ENCODE measurements at regions of chr11 and their contacts with region 1.

Region 1: GRCh38 chr11:68213555-68214174 is 569 bp upstream of the KMT5B start:
- DNase-seq: peak; percentile 67 to 96 (median 79)
- ATAC-seq: peak; percentile 33
- H3K4me3 ChIP-seq: peak overlapping the region; percentile 79 to 89
- H3K4me3 Mint-ChIP-seq: peak overlapping the region; percentile 81
- H3K27ac ChIP-seq: peak overlapping the region; percentile 55 to 58
- H3K27ac Mint-ChIP-seq: peak overlapping the region; percentile 90
- H3K4me1 ChIP-seq: peaks cover 41% of the 10 kb centered on the region
- H3K4me1 Mint-ChIP-seq: peaks cover 46% of the 10 kb centered on the region
- H3K27me3 ChIP-seq: no peaks in the 10 kb centered on the region
- H3K27me3 Mint-ChIP-seq: peaks cover 2% of the 10 kb centered on the region
- CTCF ChIP-seq: no peak

Region 2: DNA sequence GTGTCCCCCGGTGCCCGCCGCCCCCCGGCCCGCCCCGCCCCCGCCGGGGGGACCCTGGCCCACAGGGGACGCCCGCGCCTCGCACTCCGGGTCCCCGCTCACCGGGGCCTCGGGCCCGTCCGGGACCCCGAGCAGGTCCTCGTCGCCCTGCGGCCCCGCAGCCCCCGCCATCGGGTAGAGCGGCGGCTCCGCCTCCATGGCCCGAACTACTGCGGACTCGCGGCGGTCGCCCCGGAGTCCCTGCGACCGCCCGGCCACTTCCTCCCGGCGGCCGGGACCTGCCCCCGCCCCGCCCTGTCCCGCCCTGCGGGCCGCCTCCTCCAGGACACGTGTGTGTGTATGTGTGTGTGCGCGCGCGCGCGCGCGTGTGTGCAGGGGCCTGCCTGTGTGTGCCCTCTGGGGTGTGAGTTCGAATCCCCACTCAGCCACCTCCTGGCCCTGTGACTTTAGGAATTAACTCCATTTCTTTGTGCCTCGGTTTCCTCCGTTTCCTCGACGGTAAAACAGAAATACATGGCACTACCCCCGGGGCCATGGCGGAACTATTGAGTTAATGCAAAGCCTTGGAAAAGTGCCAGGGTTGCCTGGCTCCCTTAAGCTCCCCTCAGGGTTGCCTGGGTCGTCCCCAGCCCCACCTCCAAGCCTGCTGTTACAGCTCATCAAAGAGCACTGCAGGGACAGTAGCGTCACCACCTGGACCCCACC is 209.7 kb before region 1 on chr11 and contains the start of gene UNC93B1:
- CTCF ChIA-PET with region 1: interaction called, 3 read pairs
- POLR2A ChIA-PET with region 1: no interaction called
- intact Hi-C with region 1: loop called in 1 of 2 experiments (anchors 2 kb)
- DNase-seq: peak; percentile 54 to 88 (median 77)
- ATAC-seq: peak; percentile 79
- H3K4me3 ChIP-seq: peak within 1 kb of the TSS; percentile 54 to 59
- H3K4me3 Mint-ChIP-seq: peak within 1 kb of the TSS; percentile 85
- H3K27ac ChIP-seq: peak within 1 kb of the TSS in 1 of 2 experiments; percentile 36
- H3K27ac Mint-ChIP-seq: peak within 1 kb of the TSS; percentile 72
- H3K4me1 ChIP-seq: peaks cover 7% of the 10 kb centered on the region
- H3K4me1 Mint-ChIP-seq: peaks cover 19% of the 10 kb centered on the region
- H3K27me3 ChIP-seq: no peaks in the 10 kb centered on the region
- H3K27me3 Mint-ChIP-seq: no peaks in the 10 kb centered on the region
- CTCF ChIP-seq: no peak
- total RNA-seq, gene UNC93B1: 14.4 to 15.6 TPM

Region 3: GRCh38 chr11:68121067-68121899 is 92.4 kb before region 1 on chr11 and contains the start of gene CHKA:
- CTCF ChIA-PET with region 1: no interaction called
- POLR2A ChIA-PET with region 1: no interaction called
- intact Hi-C with region 1: loop called (anchors 2 kb)
- DNase-seq: peak; percentile 61 to 92 (median 80)
- ATAC-seq: peak; percentile 82
- H3K4me3 ChIP-seq: peak within 1 kb of the TSS; percentile 57 to 64
- H3K4me3 Mint-ChIP-seq: peak within 1 kb of the TSS; percentile 81
- H3K27ac ChIP-seq: peak within 1 kb of the TSS; percentile 56 to 64
- H3K27ac Mint-ChIP-seq: peak within 1 kb of the TSS; percentile 83
- H3K4me1 ChIP-seq: peaks cover 15% of the 10 kb centered on the region
- H3K4me1 Mint-ChIP-seq: peaks cover 12% of the 10 kb centered on the region
- H3K27me3 ChIP-seq: no peaks in the 10 kb centered on the region
- H3K27me3 Mint-ChIP-seq: no peaks in the 10 kb centered on the region
- CTCF ChIP-seq: no peak
- total RNA-seq, gene CHKA: 50.2 to 54.6 TPM

Region 4: DNA sequence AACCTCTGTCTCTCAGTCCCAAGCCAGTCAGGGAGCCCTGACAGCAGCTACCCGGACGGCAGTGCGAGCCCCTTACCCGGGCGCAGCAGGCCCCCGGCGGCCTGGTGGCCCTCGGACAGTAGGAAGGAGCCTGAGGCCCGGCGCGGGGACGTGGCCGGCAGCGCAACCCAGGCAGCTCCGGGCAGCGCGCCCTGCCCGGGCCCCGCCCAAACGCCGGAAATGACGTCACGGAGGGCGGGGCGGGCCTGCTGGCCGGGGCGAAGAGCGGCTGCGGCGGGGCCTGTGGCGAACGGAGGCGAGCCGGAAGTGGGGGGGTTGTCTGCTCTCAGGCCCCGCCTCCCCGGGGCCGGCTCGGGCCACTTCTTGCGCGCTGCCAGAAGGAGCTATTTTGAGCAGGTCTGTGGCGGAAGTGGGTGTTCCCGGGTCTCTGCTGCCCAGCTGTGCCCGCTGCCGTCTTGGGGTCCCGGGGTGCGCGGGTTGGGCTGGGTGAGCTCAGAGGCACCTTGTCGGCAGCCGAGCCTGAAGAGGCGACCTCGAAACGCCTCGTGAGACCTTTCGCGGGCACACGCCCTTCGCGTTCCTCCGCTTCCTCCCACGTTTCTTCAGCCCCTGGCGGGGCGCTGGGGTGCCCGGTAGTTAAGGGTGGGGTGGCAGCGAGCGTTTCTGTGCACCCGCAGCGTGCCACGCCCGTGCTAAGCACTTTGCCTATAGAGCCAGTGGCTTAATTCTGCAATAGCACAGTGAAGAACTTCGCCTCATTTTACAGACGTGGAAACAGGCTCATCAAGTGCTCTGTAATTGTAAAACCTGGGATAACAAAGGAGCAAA is 58.3 kb after region 1 on chr11 and contains the start of gene C11orf24:
- CTCF ChIA-PET with region 1: no interaction called
- POLR2A ChIA-PET with region 1: no interaction called
- intact Hi-C with region 1: loop called (anchors 1 kb)
- DNase-seq: peak; percentile 81 to 97 (median 93)
- ATAC-seq: peak; percentile 86
- H3K4me3 ChIP-seq: peak within 1 kb of the TSS; percentile 71 to 95
- H3K4me3 Mint-ChIP-seq: peak within 1 kb of the TSS; percentile 91
- H3K27ac ChIP-seq: peak within 1 kb of the TSS; percentile 93 to 97
- H3K27ac Mint-ChIP-seq: peak within 1 kb of the TSS; percentile 95
- H3K4me1 ChIP-seq: peaks cover 26% of the 10 kb centered on the region
- H3K4me1 Mint-ChIP-seq: peaks cover 32% of the 10 kb centered on the region
- H3K27me3 ChIP-seq: no peaks in the 10 kb centered on the region
- H3K27me3 Mint-ChIP-seq: no peaks in the 10 kb centered on the region
- CTCF ChIP-seq: no peak
- total RNA-seq, gene C11orf24: 6.5 to 8.2 TPM

Region 5: GRCh38 chr11:68459886-68460740 is 246.4 kb after region 1 on chr11:
- CTCF ChIA-PET with region 1: no interaction called
- POLR2A ChIA-PET with region 1: no interaction called
- intact Hi-C with region 1: loop called in 1 of 2 experiments (anchors 1 kb)
- DNase-seq: peak; percentile 90 to 98 (median 94)
- ATAC-seq: peak; percentile 91
- H3K4me3 ChIP-seq: peak overlapping the region; percentile 92 to 95
- H3K4me3 Mint-ChIP-seq: peak overlapping the region; percentile 97
- H3K27ac ChIP-seq: peak overlapping the region; percentile 95 to 98
- H3K27ac Mint-ChIP-seq: peak overlapping the region; percentile 98
- H3K4me1 ChIP-seq: peaks cover 35% of the 10 kb centered on the region
- H3K4me1 Mint-ChIP-seq: peaks cover 38% of the 10 kb centered on the region
- H3K27me3 ChIP-seq: no peaks in the 10 kb centered on the region
- H3K27me3 Mint-ChIP-seq: no peaks in the 10 kb centered on the region
- CTCF ChIP-seq: no peak

Region 6: GRCh38 chr11:68471360-68472340 is 258.0 kb after region 1 on chr11:
- CTCF ChIA-PET with region 1: no interaction called
- POLR2A ChIA-PET with region 1: no interaction called
- intact Hi-C with region 1: no loop called
- DNase-seq: peak in 5 of 9 experiments; percentile 46 to 77 (median 67)
- ATAC-seq: peak; percentile 75
- H3K4me3 ChIP-seq: peak overlapping the region; percentile 3
- H3K4me3 Mint-ChIP-seq: peak overlapping the region; percentile 63
- H3K27ac ChIP-seq: peak overlapping the region in 1 of 2 experiments; percentile 54
- H3K27ac Mint-ChIP-seq: peak overlapping the region; percentile 79
- H3K4me1 ChIP-seq: peaks cover 66% of the 10 kb centered on the region
- H3K4me1 Mint-ChIP-seq: peaks cover 77% of the 10 kb centered on the region
- H3K27me3 ChIP-seq: no peaks in the 10 kb centered on the region
- H3K27me3 Mint-ChIP-seq: no peaks in the 10 kb centered on the region
- CTCF ChIP-seq: no peak